ENCODE measurements at regions of chr2 and their contacts with region 1.

Region 1: DNA sequence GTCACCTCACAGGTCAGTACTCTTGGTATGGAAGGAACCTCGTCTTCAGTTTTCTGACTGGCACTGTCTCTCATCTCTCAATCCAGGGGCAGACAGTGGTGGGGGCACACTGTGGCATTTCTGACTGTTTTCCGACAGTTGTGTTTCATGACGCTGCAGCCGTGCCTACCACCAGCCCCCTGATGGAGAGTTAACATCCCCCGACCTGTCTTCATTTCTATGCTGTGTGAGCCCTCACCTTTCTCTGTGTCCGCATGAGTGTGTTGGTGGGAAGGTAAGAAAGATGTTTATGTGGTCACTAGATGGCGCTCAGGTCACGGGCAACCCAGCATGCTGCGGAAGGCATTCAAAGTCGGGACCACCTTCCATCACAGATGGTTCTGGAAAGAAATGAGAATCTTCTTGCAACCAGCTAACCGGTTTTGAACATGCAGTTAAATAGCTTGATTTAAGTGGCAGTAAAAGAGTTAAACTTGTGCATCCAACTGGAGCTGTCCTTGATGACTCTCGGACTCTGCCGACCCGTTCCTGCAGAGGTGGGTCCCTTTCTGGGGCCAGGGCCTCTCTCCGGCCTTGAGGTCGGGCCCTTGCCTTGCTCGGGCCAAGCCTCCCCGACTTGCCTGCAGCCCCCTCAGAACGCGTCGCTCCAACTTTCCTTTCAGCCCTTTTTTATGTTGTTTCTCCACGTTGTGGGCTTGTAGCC is 92.4 kb downstream of the DYSF start:
- DNase-seq: peak; percentile 78 to 80
- ATAC-seq: peak; percentile 88 to 92
- H3K4me3 ChIP-seq: peak overlapping the region; percentile 16; the same call in 1 of the 3 replicates
- H3K27ac ChIP-seq: no peak overlapping the region
- H3K4me1 ChIP-seq: peaks cover 8% of the 10 kb centered on the region
- CTCF ChIP-seq: peak; percentile 97
- EP300 ChIP-seq: no peak
- POLR2A ChIP-seq: no peak
- RAD21 ChIP-seq: peak; percentile 97 to 99

Region 2: DNA sequence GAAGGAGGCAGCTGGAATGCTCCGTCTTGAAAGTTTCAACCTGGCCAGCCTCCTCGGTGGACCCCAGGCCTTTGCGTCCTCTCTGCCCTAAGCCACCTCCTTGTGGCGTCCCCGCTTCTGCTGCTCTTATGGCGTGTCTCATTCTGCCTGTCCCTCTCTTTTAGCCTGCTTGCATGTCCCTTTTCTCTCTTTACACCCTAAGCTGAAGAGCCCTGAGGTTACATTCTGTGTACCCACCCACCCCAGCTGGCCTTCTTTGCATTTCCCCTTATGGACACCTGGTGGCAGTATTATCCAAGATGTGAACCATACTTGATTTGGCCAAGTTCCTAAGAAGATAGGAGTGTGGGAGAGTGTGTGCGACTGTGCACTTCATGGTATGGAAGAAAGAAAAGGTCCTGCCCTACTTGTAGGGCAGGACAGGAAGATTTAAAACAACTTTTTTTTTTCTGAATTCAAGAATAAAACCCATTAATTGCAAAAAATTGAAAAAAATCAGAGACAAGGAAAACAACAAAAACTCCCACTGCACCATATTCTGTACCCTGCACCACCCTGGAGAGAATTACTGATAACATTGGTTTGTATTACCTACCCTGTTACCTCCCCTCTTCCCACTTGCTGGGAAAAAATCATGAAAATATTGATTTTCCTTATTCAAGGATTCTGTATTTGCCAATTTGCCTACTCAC is 14.9 kb before region 1 on chr2:
- CTCF ChIA-PET with region 1: interaction called, 28 read pairs
- POLR2A ChIA-PET with region 1: no interaction called
- DNase-seq: peak; percentile 65 to 83
- ATAC-seq: peak; percentile 48 to 87; a peak in 5 of 6 replicates
- H3K4me3 ChIP-seq: no peak overlapping the region
- H3K27ac ChIP-seq: no peak overlapping the region
- H3K4me1 ChIP-seq: no peaks in the 10 kb centered on the region
- CTCF ChIP-seq: peak; percentile 66
- EP300 ChIP-seq: no peak
- POLR2A ChIP-seq: no peak
- RAD21 ChIP-seq: peak; percentile 67 to 84

Region 3: DNA sequence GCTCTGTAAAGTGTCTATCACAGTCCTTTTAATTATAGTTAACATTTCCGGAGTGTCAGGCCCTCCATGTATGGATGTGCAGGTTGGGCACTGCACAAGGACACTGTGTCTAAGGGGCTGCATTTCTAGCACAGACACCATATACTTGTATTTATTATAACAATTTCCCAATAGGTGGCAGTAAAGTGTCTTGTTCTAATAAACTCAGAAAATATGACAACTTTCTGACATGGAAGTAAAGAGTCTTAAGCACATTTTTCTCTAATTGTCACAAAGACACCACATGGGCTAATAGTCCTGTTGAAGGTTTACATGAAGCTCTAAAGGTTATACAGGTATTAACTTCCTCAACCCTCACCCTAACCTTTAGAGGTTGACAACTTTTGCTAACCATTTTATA is 64.2 kb after region 1 on chr2:
- CTCF ChIA-PET with region 1: interaction called, 13 read pairs
- POLR2A ChIA-PET with region 1: no interaction called
- DNase-seq: peak; percentile 42 to 50
- ATAC-seq: peak; percentile 57 to 80; a peak in 4 of 6 replicates
- H3K4me3 ChIP-seq: no peak overlapping the region
- H3K27ac ChIP-seq: no peak overlapping the region
- H3K4me1 ChIP-seq: no peaks in the 10 kb centered on the region
- CTCF ChIP-seq: peak; percentile 75
- EP300 ChIP-seq: no peak
- POLR2A ChIP-seq: no peak
- RAD21 ChIP-seq: peak; percentile 69 to 76

Region 4: DNA sequence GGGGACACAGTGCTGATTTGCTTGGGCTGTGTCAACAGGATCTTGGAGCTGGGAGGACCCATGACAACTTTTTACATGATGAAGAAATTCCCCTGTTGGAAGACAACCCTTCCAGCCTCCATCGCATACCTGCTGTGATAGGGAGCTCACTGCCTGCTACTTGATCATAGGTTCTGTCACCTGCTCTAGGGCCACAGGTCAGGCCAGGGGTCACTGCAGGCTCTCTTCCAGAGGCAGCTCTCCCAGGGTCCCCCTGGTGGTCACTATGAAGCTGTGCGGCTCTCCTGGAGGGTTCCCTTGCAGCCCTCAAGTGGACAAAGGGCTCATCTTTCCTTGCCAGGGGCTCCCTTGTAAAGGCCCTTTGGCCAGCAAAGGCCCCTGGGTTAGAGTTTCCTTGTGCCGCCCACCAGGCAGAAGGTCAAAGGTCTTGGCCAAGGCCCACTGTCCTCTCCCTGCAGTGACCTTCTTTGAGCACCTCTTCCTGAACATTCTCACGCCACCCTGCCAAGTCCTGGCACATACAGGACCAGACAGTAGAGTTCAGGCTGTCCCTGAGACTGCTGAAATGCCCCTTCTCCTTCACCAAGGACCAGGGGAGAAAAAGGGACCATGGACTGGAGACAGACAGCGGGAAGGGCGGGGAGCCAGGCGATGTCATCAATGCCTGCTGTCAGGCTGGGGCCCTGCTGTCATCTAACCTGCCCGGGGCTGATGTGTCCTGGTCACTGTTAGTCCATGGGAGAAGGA is 252.7 kb after region 1 on chr2:
- CTCF ChIA-PET with region 1: interaction called, 11 read pairs
- POLR2A ChIA-PET with region 1: no interaction called
- DNase-seq: peak; percentile 71 to 74
- ATAC-seq: peak; percentile 73 to 90
- H3K4me3 ChIP-seq: no peak overlapping the region
- H3K27ac ChIP-seq: no peak overlapping the region
- H3K4me1 ChIP-seq: peaks cover 9% of the 10 kb centered on the region
- CTCF ChIP-seq: peak; percentile 79
- EP300 ChIP-seq: no peak
- POLR2A ChIP-seq: no peak
- RAD21 ChIP-seq: peak; percentile 70 to 75

Region 5: GRCh38 chr2:72137498-72138010 is 591.8 kb after region 1 on chr2:
- CTCF ChIA-PET with region 1: interaction called, 33 read pairs
- POLR2A ChIA-PET with region 1: no interaction called
- DNase-seq: peak; percentile 64 to 88
- ATAC-seq: peak; percentile 70 to 91
- H3K4me3 ChIP-seq: no peak overlapping the region
- H3K27ac ChIP-seq: peak overlapping the region in 1 of 2 experiments; percentile 63; a peak in 3 of 6 replicates
- H3K4me1 ChIP-seq: peaks cover 27% of the 10 kb centered on the region
- CTCF ChIP-seq: peak; percentile 98
- EP300 ChIP-seq: no peak
- POLR2A ChIP-seq: no peak
- RAD21 ChIP-seq: peak; percentile 77 to 81

Region 6: GRCh38 chr2:72745679-72746368 is 1200.1 kb after region 1 on chr2:
- CTCF ChIA-PET with region 1: interaction called, 15 read pairs
- POLR2A ChIA-PET with region 1: no interaction called
- DNase-seq: peak; percentile 40 to 87
- ATAC-seq: peak; percentile 66 to 80; a peak in 4 of 6 replicates
- H3K4me3 ChIP-seq: no peak overlapping the region
- H3K27ac ChIP-seq: peak overlapping the region; percentile 46 to 58; a peak in 4 of 6 replicates
- H3K4me1 ChIP-seq: peaks cover 39% of the 10 kb centered on the region
- CTCF ChIP-seq: peak; percentile 98
- EP300 ChIP-seq: no peak
- POLR2A ChIP-seq: no peak
- RAD21 ChIP-seq: peak; percentile 98

Measured in A549 (cell line).